CD8-positive, alpha-beta T cell (primary cell): ENCODE measurements at regions of chr7 and their contacts with region 1.

Region 1: DNA sequence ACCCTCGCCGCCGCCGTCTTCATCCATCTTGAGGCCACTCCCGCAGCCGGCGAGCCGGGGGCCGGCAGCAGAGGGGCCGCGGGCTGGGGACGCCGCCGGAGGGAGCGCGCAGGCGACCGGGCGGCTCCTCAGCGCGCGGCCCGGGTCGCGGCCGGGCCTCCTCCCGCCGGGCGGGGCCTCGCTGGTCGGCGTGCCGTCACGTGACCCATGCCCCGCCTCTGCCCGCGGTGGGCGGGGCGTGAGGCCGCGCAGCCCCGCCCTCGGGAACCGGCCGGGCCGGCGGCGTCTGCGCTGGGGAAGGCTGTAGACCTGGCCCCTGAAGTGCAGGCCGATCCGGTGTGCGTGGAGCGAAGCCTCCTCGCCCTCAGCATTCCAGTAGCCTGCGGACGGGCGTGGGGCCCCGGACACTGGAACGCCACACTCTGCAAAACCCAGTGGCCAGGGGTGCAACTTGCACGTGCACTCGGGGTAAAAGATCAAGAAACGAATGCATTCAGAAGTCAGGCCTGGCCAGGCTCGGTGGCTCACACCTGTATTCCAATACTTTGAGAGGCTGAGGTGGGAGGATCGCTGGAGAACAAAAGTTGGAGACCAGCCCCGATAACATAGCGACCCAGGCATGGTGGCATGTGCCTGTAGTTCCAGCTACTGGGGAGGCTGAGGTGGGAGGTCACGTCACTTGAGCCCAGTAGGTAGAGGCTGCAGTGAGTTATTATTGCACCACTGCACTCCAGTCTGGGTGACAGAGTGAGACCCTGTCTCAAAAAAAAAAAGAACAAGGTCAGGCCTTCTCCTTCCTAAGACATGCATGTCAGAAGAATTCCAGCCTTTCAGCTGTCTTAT is at the start of gene CYTH3:
- DNase-seq: peak; percentile 49 to 90 (median 72)
- ATAC-seq: peak; percentile 83
- H3K4me3 ChIP-seq: peak within 1 kb of the TSS; percentile 61 to 70
- H3K4me3 Mint-ChIP-seq: peak within 1 kb of the TSS; percentile 91
- H3K27ac ChIP-seq: no peak within 1 kb of the TSS
- H3K27ac Mint-ChIP-seq: peak within 1 kb of the TSS; percentile 57
- H3K4me1 ChIP-seq: peaks cover 6% of the 10 kb centered on the region
- H3K4me1 Mint-ChIP-seq: peaks cover 24% of the 10 kb centered on the region
- H3K27me3 ChIP-seq: peaks cover 0 to 2% of the 10 kb centered on the region in 2 experiments
- H3K27me3 Mint-ChIP-seq: peaks cover 10% of the 10 kb centered on the region
- CTCF ChIP-seq: no peak
- total RNA-seq, gene CYTH3: 12.1 to 14.9 TPM

Region 2: GRCh38 chr7:6260291-6261187 is 12.2 kb before region 1 on chr7:
- CTCF ChIA-PET with region 1: interaction called, 15 read pairs
- POLR2A ChIA-PET with region 1: interaction called, 4 read pairs
- intact Hi-C with region 1: no loop called
- DNase-seq: no peak
- ATAC-seq: no peak
- H3K4me3 ChIP-seq: no peak overlapping the region
- H3K4me3 Mint-ChIP-seq: no peak overlapping the region
- H3K27ac ChIP-seq: no peak overlapping the region
- H3K27ac Mint-ChIP-seq: no peak overlapping the region
- H3K4me1 ChIP-seq: no peaks in the 10 kb centered on the region
- H3K4me1 Mint-ChIP-seq: peaks cover 47% of the 10 kb centered on the region
- H3K27me3 ChIP-seq: no peaks in the 10 kb centered on the region
- H3K27me3 Mint-ChIP-seq: no peaks in the 10 kb centered on the region
- CTCF ChIP-seq: no peak

Region 3: GRCh38 chr7:6306471-6306870 is 33.8 kb after region 1 on chr7:
- CTCF ChIA-PET with region 1: no interaction called
- POLR2A ChIA-PET with region 1: no interaction called
- intact Hi-C with region 1: loop called in 1 of 2 experiments (anchors 1 kb)
- DNase-seq: no peak
- ATAC-seq: no peak
- H3K4me3 ChIP-seq: no peak overlapping the region
- H3K4me3 Mint-ChIP-seq: no peak overlapping the region
- H3K27ac ChIP-seq: no peak overlapping the region
- H3K27ac Mint-ChIP-seq: no peak overlapping the region
- H3K4me1 ChIP-seq: no peaks in the 10 kb centered on the region
- H3K4me1 Mint-ChIP-seq: no peaks in the 10 kb centered on the region
- H3K27me3 ChIP-seq: no peaks in the 10 kb centered on the region
- H3K27me3 Mint-ChIP-seq: no peaks in the 10 kb centered on the region
- CTCF ChIP-seq: no peak